ENCODE measurements at regions of chr3 and their contacts with region 1.

Region 1: DNA sequence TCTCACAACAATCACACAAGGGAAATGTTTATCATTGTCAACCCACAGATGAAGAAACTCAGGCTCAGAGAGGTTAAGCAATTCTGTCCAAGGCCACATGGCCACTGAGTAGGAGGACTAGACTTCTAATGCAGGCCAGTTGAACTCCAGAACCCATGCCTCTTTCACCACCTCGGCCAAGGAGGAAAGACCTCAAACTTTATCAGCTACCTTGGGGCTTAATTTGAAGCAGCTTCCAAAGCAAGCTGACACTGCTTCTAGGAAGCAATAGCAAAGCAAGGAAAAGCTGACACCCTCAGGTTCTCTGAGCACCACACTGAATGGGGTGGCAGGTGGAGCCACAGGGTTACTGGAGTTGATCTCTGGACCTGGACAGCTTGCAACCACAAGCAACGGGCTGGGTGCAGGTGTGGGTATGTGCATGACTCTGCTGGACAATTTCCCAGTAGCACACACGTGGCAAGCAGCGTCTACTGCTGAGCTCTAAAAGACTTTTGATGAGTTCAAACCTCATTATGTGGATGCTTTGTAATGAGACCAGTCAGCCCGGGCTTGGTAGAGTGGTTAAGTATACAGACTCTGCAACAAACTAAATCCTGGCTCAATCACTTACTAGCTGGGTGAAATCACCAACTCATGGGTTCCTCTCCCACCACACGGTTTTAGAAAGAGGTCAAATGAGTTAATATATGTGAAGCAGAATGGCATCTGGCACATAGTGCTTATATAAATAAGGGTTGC is 23.1 kb downstream of the CCNL1 start:
- DNase-seq: peak in 2 of 3 donors; percentile 44 to 67
- ATAC-seq: peak; percentile 20 to 23
- H3K4me3 ChIP-seq: no peak overlapping the region
- H3K27ac ChIP-seq: peak overlapping the region; percentile 33
- H3K4me1 ChIP-seq: peaks cover 21% of the 10 kb centered on the region
- H3K27me3 ChIP-seq: no peaks in the 10 kb centered on the region

Region 2: DNA sequence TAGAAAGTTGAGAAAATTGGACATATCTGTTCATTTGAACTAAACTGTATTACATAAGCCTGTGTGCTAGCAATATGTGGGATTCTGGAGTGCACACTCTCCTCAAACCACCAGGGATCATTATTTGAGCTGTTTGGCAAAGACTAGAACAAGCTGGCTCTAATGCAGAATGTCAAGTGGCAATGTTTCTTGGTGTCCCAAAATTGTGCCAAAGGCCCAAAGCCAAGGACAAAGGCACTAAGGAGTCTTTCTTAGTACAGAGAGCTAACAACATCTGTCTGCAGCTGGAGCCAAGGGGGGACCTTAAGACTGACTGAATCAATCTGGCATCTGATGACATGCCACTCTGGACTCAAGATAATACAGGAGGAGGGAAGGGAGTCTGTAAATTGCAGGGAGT is 1766.6 kb before region 1 on chr3:
- intact Hi-C with region 1: no loop called
- DNase-seq: peak; percentile 69 to 87 (median 74)
- ATAC-seq: peak; percentile 94 to 95
- H3K4me3 ChIP-seq: no peak overlapping the region
- H3K27ac ChIP-seq: peak overlapping the region; percentile 59
- H3K4me1 ChIP-seq: peaks cover 9% of the 10 kb centered on the region
- H3K27me3 ChIP-seq: no peaks in the 10 kb centered on the region

Region 3: DNA sequence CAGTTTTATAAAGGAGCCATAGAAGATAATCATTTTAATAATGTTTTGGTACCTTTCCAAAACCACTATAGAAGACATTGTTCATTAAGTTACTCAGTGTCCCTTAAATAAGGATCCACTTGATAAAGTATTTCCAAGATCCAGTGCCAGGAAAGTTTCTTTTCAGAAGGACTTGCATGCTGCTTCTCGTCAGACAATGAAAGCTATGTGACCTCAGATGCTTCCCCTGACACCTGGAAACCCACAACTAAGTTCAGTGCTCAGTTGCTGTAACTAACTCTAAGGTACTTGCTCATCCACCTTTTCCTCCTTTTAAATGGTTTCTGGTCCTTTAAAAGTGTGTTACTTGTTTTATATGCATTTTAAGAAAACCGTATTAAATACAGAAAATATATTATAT is 589.2 kb before region 1 on chr3:
- intact Hi-C with region 1: loop called in 2 of 4 experiments (anchors 5 to 10 kb)
- DNase-seq: no peak
- ATAC-seq: peak; percentile 43 to 51
- H3K4me3 ChIP-seq: peak overlapping the region; percentile 5
- H3K27ac ChIP-seq: no peak overlapping the region
- H3K4me1 ChIP-seq: peaks cover 9% of the 10 kb centered on the region
- H3K27me3 ChIP-seq: no peaks in the 10 kb centered on the region

Region 4: DNA sequence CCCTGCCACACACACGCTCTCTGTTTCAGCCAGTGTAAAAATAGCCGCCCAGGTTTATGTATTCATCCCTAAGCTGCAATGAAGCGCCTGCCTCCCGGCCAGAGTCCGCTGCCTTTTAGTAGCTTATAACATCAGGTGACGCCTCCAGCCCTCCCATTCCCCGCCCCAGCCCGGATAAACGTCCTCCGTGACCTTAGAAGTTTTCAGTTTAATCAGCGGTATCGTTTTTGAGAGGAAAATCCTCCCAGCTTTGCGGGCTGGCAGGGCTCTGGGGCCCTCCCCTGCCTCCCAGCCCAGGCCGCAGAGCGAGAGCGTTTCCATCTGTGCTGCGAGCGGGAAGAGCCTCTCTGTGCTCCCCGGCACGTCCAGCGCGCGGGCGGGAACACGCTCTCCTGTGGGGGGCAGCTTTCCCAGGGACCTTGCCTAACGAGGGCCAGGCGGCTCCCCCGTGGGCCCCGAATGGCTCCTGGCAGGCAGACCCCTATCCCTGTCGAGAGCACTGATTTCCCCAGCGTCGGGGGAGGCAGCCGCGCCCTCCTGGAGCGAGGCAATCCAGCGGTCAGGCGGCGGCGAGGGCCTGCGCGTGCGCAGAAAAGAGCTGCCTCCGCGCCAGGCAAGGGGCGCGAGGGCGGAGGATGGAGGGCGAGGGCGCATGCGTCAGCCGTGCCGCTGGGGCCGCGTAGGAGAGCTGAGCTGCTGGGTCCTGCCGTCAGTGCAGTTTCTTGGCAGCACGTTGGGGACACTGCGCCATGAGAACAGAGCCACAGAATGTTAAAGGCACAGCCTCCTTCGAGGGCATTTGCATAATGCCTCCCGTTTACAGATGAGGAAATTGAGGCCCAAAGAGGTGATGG is 48.0 kb before region 1 on chr3:
- intact Hi-C with region 1: loop called in 2 of 4 experiments (anchors 2 to 5 kb)
- DNase-seq: peak; percentile 97 to 99 (median 99)
- ATAC-seq: peak; percentile 91 to 92
- H3K4me3 ChIP-seq: peak overlapping the region; percentile 45
- H3K27ac ChIP-seq: peak overlapping the region; percentile 98
- H3K4me1 ChIP-seq: peaks cover 14% of the 10 kb centered on the region
- H3K27me3 ChIP-seq: no peaks in the 10 kb centered on the region